GM10248 (cell line): ENCODE measurements at regions of chr4 and their contacts with region 1.

Region 1: GRCh38 chr4:154612472-154613414 is at the start of gene FGG:
- DNase-seq: no peak
- CTCF ChIP-seq: no peak

Region 2: DNA sequence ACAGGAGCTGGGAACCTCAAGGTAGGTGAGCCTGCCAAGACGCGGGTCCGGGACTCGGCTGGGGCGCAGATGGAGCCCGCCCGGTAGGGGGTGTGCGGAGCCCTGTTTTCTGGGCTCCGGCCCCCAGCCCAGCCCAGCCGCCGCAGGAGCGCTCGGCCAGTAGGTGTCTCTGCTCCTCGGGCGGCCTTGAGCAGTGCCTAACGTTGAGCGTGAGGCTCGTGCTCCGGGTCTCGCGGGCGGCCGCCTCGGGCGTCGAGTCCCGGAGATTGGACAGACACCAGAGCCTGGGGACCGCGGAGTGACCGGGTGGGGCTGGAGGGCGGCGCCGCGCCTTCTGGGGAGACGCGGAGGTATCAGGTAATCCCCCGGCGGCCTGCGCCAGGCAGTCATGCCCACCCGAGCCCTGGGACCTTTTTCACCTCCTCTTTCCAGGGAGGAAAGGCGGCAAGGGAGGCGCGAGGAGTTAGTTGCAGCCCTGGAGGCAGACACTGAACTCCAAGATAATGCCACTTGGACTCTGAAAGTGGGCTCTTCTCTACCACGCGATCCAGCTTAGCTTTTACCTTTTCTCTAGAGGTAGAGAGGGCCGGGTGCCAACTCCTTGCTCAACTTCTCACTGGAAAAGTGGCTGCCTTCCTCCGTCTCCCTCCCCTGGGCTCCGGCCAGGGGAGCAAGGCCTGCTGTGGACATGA is 14.2 kb after region 1 on chr4:
- CTCF ChIA-PET with region 1: interaction called, 14 read pairs
- POLR2A ChIA-PET with region 1: no interaction called
- DNase-seq: peak; percentile 78
- CTCF ChIP-seq: peak; percentile 62

Region 3: GRCh38 chr4:154677923-154678322 is 65.2 kb after region 1 on chr4:
- CTCF ChIA-PET with region 1: no interaction called
- POLR2A ChIA-PET with region 1: no interaction called
- DNase-seq: no peak
- CTCF ChIP-seq: no peak